ENCODE measurements at regions of chr22 and their contacts with region 1.

Region 1: DNA sequence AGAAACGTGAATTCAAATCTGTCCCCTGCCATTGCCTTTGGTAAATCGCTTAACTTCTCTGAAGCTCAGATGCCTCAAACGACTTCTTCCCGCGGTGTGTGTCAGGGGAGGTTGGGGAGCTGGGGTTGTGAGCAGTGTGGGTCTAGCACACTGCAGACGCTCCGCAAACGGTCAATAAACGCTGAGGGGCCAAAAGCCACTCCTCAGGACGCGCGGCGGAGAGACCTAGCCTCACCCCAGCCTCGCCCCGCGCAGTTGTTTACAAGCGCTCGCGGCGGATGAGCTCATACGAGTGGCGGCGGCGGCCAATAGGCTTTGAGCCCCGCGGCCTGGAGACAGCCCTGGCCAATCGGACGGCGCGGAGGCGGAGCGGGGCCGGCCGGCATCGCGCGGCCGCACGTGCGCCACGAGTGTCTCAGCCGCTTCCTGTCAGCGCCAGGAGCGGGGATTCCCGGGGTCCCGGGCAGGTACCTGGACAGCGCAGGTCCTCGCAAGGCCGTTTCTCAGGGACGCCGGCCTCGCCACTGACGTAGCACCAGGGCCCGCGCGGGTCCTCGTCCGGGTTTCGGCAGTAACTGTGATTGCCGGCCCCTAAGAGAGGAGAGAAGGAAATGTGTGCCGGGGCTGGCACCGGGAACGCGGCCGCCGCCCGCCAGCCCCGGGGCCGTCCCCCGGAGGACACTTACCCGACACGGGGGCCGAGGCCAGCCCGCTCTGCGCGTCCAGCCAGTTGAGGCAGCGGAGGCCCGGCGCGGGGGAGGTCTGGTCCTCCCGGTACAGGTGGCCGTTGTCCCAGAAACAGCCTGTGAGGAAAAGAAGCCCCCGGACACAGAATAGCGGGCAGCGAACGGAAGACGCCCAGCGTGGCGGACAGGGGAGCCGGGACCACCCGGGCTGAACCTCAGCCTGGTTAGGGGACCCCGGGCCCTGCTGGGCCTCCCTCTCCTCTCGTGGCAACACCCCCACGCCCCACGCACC is 1.5 kb downstream of the PIK3IP1 start:
- DNase-seq: peak; percentile 93
- H3K4me3 Mint-ChIP-seq: peak overlapping the region; percentile 82
- H3K27ac Mint-ChIP-seq: peak overlapping the region; percentile 70
- H3K4me1 Mint-ChIP-seq: peaks cover 13% of the 10 kb centered on the region
- H3K27me3 Mint-ChIP-seq: no peaks in the 10 kb centered on the region
- CTCF ChIP-seq: no peak

Region 2: GRCh38 chr22:30968924-30969539 is 321.8 kb before region 1 on chr22 and contains the start of gene TUG1:
- CTCF ChIA-PET with region 1: no interaction called
- POLR2A ChIA-PET with region 1: interaction called, 11 read pairs
- intact Hi-C with region 1: no loop called
- DNase-seq: peak; percentile 98
- H3K4me3 Mint-ChIP-seq: peak within 1 kb of the TSS; percentile 88
- H3K27ac Mint-ChIP-seq: peak within 1 kb of the TSS; percentile 88
- H3K4me1 Mint-ChIP-seq: peaks cover 28% of the 10 kb centered on the region
- H3K27me3 Mint-ChIP-seq: no peaks in the 10 kb centered on the region
- CTCF ChIP-seq: no peak
- total RNA-seq, gene TUG1: 85.5 and 99.0 TPM in 2 replicates

Region 3: DNA sequence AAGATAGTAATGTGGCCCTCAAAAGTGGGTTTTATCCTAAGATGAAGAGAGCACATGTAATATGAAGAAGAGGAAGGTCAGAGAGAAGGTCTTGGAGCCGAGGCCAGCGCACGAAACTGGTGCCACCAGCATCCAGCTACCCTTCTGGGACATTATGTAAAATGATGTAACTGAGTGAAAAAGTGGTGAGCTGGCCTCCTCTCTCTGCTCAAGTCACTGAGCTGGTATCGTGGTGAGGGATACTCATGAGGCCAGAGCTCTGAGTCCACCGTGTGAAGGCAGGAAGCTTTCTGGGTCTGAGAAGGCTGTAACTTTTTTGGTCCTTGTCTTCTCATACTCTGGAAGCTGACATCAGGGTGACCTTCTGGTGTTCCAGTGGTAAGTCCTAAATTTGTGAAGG is 105.7 kb before region 1 on chr22:
- CTCF ChIA-PET with region 1: no interaction called
- POLR2A ChIA-PET with region 1: no interaction called
- intact Hi-C with region 1: no loop called
- DNase-seq: no peak
- H3K4me3 Mint-ChIP-seq: no peak overlapping the region
- H3K27ac Mint-ChIP-seq: no peak overlapping the region
- H3K4me1 Mint-ChIP-seq: peaks cover 6% of the 10 kb centered on the region
- H3K27me3 Mint-ChIP-seq: no peaks in the 10 kb centered on the region
- CTCF ChIP-seq: no peak

Region 4: DNA sequence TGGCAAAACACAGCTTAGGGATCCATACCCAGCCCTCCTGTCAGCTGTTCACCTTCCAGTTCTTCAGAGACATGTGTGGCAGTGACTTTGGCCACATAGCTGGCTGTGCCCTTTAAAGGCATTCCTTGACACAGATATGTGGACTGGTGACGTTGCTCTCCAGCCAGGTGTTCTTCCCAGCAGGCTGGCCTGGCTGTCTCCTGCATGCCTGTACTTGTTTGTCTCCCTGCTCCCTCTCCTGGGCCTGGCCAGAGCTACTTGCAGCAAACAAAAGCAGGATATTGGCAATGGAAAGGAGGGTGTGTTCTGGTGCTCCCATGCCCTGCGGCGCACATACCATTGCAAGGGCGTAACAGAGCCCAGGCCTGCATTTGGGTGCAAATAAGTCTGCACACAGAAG is 36.8 kb before region 1 on chr22:
- CTCF ChIA-PET with region 1: interaction called, 4 read pairs
- POLR2A ChIA-PET with region 1: interaction called, 62 read pairs
- intact Hi-C with region 1: no loop called
- DNase-seq: peak; percentile 97
- H3K4me3 Mint-ChIP-seq: peak overlapping the region; percentile 52
- H3K27ac Mint-ChIP-seq: peak overlapping the region; percentile 94
- H3K4me1 Mint-ChIP-seq: peaks cover 26% of the 10 kb centered on the region
- H3K27me3 Mint-ChIP-seq: no peaks in the 10 kb centered on the region
- CTCF ChIP-seq: no peak

Region 5: GRCh38 chr22:31302006-31302405 is 11.2 kb after region 1 on chr22:
- CTCF ChIA-PET with region 1: interaction called, 5 read pairs
- POLR2A ChIA-PET with region 1: interaction called, 50 read pairs
- intact Hi-C with region 1: no loop called
- DNase-seq: no peak
- H3K4me3 Mint-ChIP-seq: no peak overlapping the region
- H3K27ac Mint-ChIP-seq: no peak overlapping the region
- H3K4me1 Mint-ChIP-seq: no peaks in the 10 kb centered on the region
- H3K27me3 Mint-ChIP-seq: no peaks in the 10 kb centered on the region
- CTCF ChIP-seq: no peak

Region 6: DNA sequence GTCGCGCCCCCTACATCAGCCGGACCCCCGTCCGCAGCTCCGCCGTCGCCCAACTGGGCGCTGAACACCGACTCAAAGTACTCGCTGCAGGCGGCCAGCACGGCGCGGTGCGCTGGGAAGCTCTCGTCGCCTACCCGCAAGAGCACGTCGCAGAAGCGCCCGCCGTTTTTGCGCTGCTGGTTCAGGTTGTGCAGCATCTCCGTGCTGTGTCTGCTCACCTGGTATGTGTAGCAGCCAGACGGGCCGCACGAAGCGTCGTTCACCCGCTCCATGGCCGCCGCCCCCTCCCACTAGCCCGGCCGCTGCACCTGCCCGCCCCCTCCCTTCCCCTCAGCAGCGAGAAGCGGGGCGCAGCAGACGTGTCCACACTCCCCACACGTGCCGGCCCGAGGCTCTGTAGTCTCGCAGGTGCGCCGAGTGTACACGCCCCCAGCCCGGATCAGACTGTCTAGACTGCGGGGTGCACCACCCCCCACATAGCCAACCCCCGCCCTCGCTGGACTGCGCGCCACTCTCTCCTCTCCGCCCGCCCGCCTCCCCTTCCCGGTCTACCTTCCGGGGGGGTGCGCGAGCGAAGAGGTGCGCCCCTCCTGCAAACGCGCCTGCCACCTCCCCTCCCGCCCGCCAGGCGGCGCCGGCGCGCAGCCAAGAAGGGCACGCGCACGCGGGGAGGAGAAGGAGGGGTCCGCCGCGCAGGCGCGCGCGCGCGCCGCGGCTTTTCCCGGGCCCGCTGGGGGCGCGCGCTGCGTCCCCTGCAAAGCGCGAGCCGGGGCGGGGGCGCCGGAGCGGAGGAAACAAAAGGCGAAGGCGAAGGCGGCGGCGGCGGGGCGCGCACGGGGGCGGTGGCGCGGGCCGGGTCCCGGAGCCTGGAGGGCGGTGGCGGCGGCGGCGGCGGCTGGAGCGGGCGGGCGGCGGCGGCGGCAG is 54.8 kb after region 1 on chr22:
- CTCF ChIA-PET with region 1: interaction called, 11 read pairs
- POLR2A ChIA-PET with region 1: interaction called, 42 read pairs
- intact Hi-C with region 1: no loop called
- DNase-seq: peak; percentile 83
- H3K4me3 Mint-ChIP-seq: peak overlapping the region; percentile 76
- H3K27ac Mint-ChIP-seq: no peak overlapping the region
- H3K4me1 Mint-ChIP-seq: peaks cover 18% of the 10 kb centered on the region
- H3K27me3 Mint-ChIP-seq: no peaks in the 10 kb centered on the region
- CTCF ChIP-seq: peak; percentile 78